ENCODE measurements at regions of chr15 and their contacts with region 1.

Region 1: DNA sequence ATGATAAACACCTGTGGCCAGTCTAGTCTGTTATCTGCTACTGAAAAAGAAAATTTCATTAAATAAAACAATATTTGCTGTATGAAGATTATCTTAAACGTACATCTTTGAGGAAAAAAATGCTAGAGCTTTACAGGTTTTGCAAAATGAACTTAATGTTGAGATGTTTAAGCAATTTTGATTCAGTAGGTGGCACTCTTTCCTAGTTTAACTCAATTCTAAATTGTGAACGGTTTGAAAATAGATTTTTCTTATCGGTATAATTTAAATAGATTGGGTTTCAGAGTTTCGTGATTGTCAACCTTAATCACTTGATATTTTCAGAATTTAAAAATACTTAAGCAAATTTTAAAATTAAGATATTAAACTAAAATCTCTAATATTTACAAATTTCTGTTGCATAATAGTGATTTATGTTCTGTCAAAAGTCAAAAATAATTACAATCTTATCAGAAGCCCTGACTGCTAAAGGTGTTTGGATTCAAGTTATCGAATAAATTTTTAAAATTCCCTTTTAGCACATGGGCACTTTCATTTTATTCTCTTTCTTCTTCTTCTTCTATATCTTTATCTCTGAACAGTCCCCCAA is 7.0 kb upstream of the RNF111 start:
- DNase-seq: peak in 2 of 9 experiments; percentile 61 to 72
- ATAC-seq: peak; percentile 38
- H3K4me3 ChIP-seq: no peak overlapping the region
- H3K4me3 Mint-ChIP-seq: peak overlapping the region; percentile 29
- H3K27ac ChIP-seq: no peak overlapping the region
- H3K27ac Mint-ChIP-seq: no peak overlapping the region
- H3K4me1 ChIP-seq: peaks cover 23% of the 10 kb centered on the region
- H3K4me1 Mint-ChIP-seq: peaks cover 29% of the 10 kb centered on the region
- H3K27me3 ChIP-seq: no peaks in the 10 kb centered on the region
- H3K27me3 Mint-ChIP-seq: no peaks in the 10 kb centered on the region
- CTCF ChIP-seq: peak; percentile 79

Region 2: DNA sequence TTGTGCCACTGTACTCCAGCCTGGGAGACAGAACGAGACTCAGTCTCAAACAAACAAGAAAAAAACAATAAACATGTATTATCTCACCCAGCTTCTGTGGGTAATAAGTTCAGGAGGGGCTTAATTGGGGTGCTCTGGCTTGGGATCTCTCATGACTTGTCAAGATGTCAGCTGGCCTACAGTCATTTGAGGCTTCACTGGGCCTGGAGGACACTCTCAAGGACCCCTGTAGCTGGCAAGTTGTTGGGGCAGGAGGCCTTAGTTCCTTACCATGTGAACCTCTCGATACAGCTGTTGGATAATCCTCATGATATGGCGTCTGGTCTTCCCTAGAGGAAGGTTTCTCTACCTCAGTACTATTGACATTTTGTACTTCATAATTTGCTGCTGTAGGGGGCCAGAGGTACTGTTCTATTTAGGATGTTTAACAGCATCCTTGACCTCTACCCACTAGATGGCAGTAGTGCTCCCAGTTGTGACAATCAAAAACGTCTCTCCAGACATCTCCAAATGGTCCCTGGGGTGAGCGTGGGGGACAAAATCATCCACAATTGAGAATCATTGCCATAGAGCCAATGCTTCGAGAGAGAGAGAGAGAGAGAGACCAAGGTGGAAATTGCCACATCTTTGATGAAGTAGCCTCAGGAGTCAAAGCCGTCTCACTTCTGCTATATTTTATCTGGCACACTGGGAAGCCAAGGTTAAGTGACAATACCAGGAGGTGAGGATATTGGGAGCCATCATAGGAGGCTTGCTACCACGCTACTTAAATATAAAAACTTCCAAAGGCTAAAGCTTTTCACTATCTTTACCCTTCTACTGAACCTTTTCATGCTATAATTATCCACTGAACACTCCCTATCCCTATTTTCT is 23.1 kb before region 1 on chr15:
- CTCF ChIA-PET with region 1: interaction called, 6 read pairs
- POLR2A ChIA-PET with region 1: no interaction called
- intact Hi-C with region 1: loop called in 1 of 2 experiments (anchors 2 kb)
- DNase-seq: peak; percentile 18 to 84 (median 61)
- ATAC-seq: peak; percentile 96
- H3K4me3 ChIP-seq: no peak overlapping the region
- H3K4me3 Mint-ChIP-seq: no peak overlapping the region
- H3K27ac ChIP-seq: no peak overlapping the region
- H3K27ac Mint-ChIP-seq: no peak overlapping the region
- H3K4me1 ChIP-seq: no peaks in the 10 kb centered on the region
- H3K4me1 Mint-ChIP-seq: peaks cover 10% of the 10 kb centered on the region
- H3K27me3 ChIP-seq: no peaks in the 10 kb centered on the region
- H3K27me3 Mint-ChIP-seq: no peaks in the 10 kb centered on the region
- CTCF ChIP-seq: peak; percentile 82

Region 3: GRCh38 chr15:59059076-59059597 is 78.7 kb after region 1 on chr15:
- CTCF ChIA-PET with region 1: no interaction called
- POLR2A ChIA-PET with region 1: no interaction called
- intact Hi-C with region 1: loop called in 1 of 2 experiments (anchors 2 kb)
- DNase-seq: no peak
- ATAC-seq: no peak
- H3K4me3 ChIP-seq: no peak overlapping the region
- H3K4me3 Mint-ChIP-seq: no peak overlapping the region
- H3K27ac ChIP-seq: no peak overlapping the region
- H3K27ac Mint-ChIP-seq: no peak overlapping the region
- H3K4me1 ChIP-seq: no peaks in the 10 kb centered on the region
- H3K4me1 Mint-ChIP-seq: no peaks in the 10 kb centered on the region
- H3K27me3 ChIP-seq: no peaks in the 10 kb centered on the region
- H3K27me3 Mint-ChIP-seq: no peaks in the 10 kb centered on the region
- CTCF ChIP-seq: no peak

Region 4: DNA sequence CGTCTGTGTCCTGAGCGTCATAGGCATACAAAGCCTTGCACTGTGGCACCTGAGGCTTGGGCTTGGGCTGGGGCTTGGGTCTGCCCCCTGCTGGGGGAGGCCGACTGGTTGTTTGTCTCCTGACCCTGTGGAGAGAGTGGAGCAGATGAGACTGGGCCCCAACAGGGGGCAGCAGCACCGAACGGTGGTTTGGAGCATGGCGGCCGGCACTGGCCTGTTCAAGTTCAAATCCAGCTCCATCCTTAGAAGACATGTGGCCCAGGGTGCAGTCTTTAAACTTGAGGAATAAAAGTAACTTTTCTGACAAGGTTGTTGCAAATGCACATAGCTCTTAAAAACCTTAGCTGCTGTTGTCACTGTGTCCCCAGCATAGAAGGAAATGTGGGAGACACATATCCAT is 157.8 kb after region 1 on chr15:
- CTCF ChIA-PET with region 1: interaction called, 7 read pairs
- POLR2A ChIA-PET with region 1: no interaction called
- intact Hi-C with region 1: loop called (anchors 1 to 2 kb)
- DNase-seq: peak; percentile 17 to 69 (median 52)
- ATAC-seq: peak; percentile 83
- H3K4me3 ChIP-seq: no peak overlapping the region
- H3K4me3 Mint-ChIP-seq: no peak overlapping the region
- H3K27ac ChIP-seq: no peak overlapping the region
- H3K27ac Mint-ChIP-seq: no peak overlapping the region
- H3K4me1 ChIP-seq: no peaks in the 10 kb centered on the region
- H3K4me1 Mint-ChIP-seq: peaks cover 5% of the 10 kb centered on the region
- H3K27me3 ChIP-seq: no peaks in the 10 kb centered on the region
- H3K27me3 Mint-ChIP-seq: no peaks in the 10 kb centered on the region
- CTCF ChIP-seq: peak; percentile 42

Region 5: GRCh38 chr15:59247364-59247763 is 266.9 kb after region 1 on chr15:
- CTCF ChIA-PET with region 1: interaction called, 5 read pairs
- POLR2A ChIA-PET with region 1: no interaction called
- intact Hi-C with region 1: loop called in 1 of 2 experiments (anchors 1 kb)
- DNase-seq: peak; percentile 20 to 76 (median 55)
- ATAC-seq: peak; percentile 68
- H3K4me3 ChIP-seq: no peak overlapping the region
- H3K4me3 Mint-ChIP-seq: no peak overlapping the region
- H3K27ac ChIP-seq: no peak overlapping the region
- H3K27ac Mint-ChIP-seq: no peak overlapping the region
- H3K4me1 ChIP-seq: no peaks in the 10 kb centered on the region
- H3K4me1 Mint-ChIP-seq: peaks cover 3% of the 10 kb centered on the region
- H3K27me3 ChIP-seq: no peaks in the 10 kb centered on the region
- H3K27me3 Mint-ChIP-seq: no peaks in the 10 kb centered on the region
- CTCF ChIP-seq: peak; percentile 48

Region 6: DNA sequence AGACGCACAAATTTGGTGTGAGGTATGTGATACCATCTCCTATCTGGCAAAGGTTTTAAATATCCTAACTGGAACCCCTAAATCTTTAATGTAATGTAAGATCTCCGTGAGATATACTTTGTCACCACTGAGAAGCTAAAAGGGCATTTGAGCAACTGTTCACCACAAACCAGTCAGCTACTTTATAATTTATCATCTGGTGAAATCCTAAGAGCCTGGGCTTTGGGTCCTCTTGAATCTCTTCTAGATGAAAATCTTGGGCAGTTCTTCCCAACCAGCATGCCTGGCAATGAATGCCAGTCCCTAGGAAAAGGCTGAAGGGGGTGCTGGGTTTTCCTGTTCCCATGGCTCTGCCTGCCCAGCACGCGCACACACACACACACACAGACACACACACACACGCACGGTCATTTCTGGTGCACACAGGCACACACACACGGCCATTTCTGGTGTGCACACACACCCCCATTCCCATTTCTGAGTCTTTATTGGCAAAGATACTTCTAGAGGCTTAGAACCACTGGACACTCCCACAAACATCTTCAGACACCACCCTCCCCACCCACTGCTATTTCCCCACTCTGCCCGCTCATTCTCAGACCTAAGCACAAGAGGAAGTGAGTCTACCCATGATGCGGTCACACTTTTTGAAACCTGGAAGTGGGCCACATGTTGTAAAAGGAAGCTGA is 319.6 kb after region 1 on chr15:
- CTCF ChIA-PET with region 1: no interaction called
- POLR2A ChIA-PET with region 1: no interaction called
- intact Hi-C with region 1: loop called in 1 of 2 experiments (anchors 5 kb)
- DNase-seq: peak; percentile 44 to 88 (median 68)
- ATAC-seq: peak; percentile 98
- H3K4me3 ChIP-seq: peak overlapping the region; percentile 13 to 21
- H3K4me3 Mint-ChIP-seq: peak overlapping the region; percentile 71
- H3K27ac ChIP-seq: peak overlapping the region in 1 of 2 experiments; percentile 74
- H3K27ac Mint-ChIP-seq: peak overlapping the region; percentile 60
- H3K4me1 ChIP-seq: peaks cover 21% of the 10 kb centered on the region
- H3K4me1 Mint-ChIP-seq: peaks cover 28% of the 10 kb centered on the region
- H3K27me3 ChIP-seq: no peaks in the 10 kb centered on the region
- H3K27me3 Mint-ChIP-seq: no peaks in the 10 kb centered on the region
- CTCF ChIP-seq: no peak

Region 7: DNA sequence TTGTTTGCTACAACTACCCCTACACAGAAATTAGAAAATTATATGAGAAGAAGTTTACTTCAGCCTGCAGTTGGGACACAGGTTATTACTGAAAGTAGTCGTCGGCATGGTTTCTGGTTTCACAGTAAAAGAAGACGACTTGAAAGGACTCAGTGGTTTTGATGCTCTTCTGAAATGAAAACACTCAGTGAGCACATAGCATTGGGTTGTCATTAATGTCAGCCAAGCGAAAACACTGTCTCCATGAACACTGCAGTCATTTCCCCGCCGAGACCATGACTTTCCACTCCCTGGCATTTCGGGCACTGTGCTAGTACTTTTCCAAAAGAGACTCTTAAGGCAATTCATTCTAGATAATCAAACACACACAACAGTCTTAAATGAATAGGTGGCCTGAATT is 1567.7 kb after region 1 on chr15:
- CTCF ChIA-PET with region 1: no interaction called
- POLR2A ChIA-PET with region 1: no interaction called
- intact Hi-C with region 1: no loop called
- DNase-seq: peak in 5 of 9 experiments; percentile 38 to 71 (median 48)
- ATAC-seq: peak; percentile 67
- H3K4me3 ChIP-seq: peak overlapping the region in 1 of 2 experiments; percentile 0
- H3K4me3 Mint-ChIP-seq: peak overlapping the region; percentile 57
- H3K27ac ChIP-seq: peak overlapping the region in 1 of 2 experiments; percentile 84
- H3K27ac Mint-ChIP-seq: peak overlapping the region; percentile 89
- H3K4me1 ChIP-seq: peaks cover 90% of the 10 kb centered on the region
- H3K4me1 Mint-ChIP-seq: peaks cover 92% of the 10 kb centered on the region
- H3K27me3 ChIP-seq: no peaks in the 10 kb centered on the region
- H3K27me3 Mint-ChIP-seq: no peaks in the 10 kb centered on the region
- CTCF ChIP-seq: no peak